Left cardiac atrium (tissue), 4 donors: ENCODE measurements at regions of chr1 and their contacts with region 1.

Region 1: DNA sequence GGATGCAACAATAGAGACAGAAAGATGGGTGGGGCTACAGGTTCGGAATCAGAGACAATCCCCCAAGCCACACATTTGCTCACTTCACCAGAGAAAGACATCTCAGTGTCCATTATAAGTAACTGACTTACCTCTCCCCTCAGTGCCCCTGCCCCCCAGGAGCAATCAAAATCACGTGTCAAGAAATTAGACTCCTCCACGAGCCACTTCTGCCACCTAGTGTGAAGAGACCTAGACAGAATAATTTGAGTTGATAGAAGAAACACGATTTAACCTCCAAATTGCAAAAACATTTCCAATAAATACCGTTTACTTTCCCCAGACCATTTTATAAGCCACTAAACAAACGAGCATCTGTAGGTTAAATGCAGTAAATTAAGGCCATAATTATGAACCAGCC is 123.2 kb downstream of the SLC30A10 start:
- DNase-seq: no peak
- ATAC-seq: no peak

Region 2: GRCh38 chr1:219582296-219582695 is 222.9 kb before region 1 on chr1:
- intact Hi-C with region 1: loop called in 1 of 2 experiments (anchors 10 kb)
- DNase-seq: no peak
- ATAC-seq: peak in 1 of 2 donors; percentile 45